Astrocyte of the cerebellum (primary cell): ENCODE measurements at regions of chr16 and their contacts with region 1.

Region 1: GRCh38 chr16:17658881-17659280 is 188.1 kb upstream of the XYLT1 start:
- DNase-seq: no peak
- H3K4me3 ChIP-seq: no peak overlapping the region
- CTCF ChIP-seq: no peak

Region 2: DNA sequence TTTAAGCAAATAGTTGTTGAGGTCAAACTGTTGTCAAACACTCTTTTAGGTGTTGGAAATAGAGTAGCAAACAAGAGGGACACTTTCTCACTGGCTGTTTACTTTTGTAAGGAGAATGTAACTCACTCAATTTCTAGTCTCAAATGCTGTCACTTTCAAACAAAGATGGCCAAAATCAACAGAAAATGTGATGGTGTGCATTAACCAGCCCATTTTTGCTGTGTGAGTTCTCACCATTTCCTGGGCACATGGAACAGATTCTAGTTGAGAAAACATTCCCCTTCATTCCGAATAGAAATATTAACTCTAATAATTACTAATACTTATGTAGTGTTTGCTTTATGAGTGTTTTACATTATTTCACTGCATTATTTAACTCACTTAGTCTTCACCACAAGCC is 59.9 kb before region 1 on chr16:
- in situ Hi-C with region 1: loop called (anchors 5 kb)
- DNase-seq: no peak
- H3K4me3 ChIP-seq: no peak overlapping the region
- CTCF ChIP-seq: no peak

Region 3: GRCh38 chr16:17759451-17760390 is 100.8 kb after region 1 on chr16:
- in situ Hi-C with region 1: no loop called
- DNase-seq: no peak
- H3K4me3 ChIP-seq: no peak overlapping the region
- CTCF ChIP-seq: no peak